ENCODE measurements at regions of chr11 and their contacts with region 1.

Region 1: DNA sequence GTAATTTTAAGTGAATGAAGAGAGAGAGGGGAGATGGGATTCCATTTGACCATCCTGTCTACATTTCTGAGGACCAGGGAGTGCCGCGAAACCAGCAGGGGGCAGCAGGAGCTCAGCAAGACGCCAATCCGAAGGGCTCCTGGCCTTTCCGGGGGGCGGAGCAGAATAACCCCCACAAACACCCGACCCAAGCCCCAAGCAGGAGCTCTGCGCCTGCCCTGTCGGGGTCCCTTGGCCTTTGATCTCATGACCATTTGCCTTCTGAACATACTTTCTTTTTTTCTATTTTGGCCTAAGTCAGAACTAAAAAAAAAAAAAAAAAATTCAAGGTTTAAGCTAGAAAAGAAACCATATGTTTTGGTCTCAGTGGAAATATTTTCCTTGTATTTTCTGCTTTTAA is 21.9 kb upstream of the SCN2B start:
- DNase-seq: peak; percentile 80 to 91 (median 83)
- ATAC-seq: peak; percentile 33 to 64 (median 55)
- H3K4me3 ChIP-seq: peak overlapping the region in 5 of 12 donors; percentile 22 to 42 (median 28)
- H3K27ac ChIP-seq: peak overlapping the region in 8 of 12 donors; percentile 10 to 50 (median 33)
- H3K4me1 ChIP-seq: peaks cover 0 to 57% (median 25%) of the 10 kb centered on the region in 12 donors
- H3K27me3 ChIP-seq: no peaks in the 10 kb centered on the region
- CTCF ChIP-seq: peak; percentile 84 to 93 (median 90)
- POLR2A ChIP-seq: no peak

Region 2: GRCh38 chr11:118180300-118180703 is 18.1 kb before region 1 on chr11:
- intact Hi-C with region 1: loop called in 3 of 10 experiments (anchors 1 to 2 kb)
- DNase-seq: peak; percentile 81 to 92 (median 84)
- ATAC-seq: peak; percentile 95 to 98 (median 97)
- H3K4me3 ChIP-seq: peak overlapping the region in 3 of 12 donors; percentile 13 to 35 (median 25)
- H3K27ac ChIP-seq: peak overlapping the region in 11 of 12 donors; percentile 31 to 86 (median 76)
- H3K4me1 ChIP-seq: peaks cover 0 to 27% (median 9%) of the 10 kb centered on the region in 12 donors
- H3K27me3 ChIP-seq: no peaks in the 10 kb centered on the region
- CTCF ChIP-seq: peak in 4 of 12 donors; percentile 10 to 36 (median 22)
- POLR2A ChIP-seq: no peak

Region 3: GRCh38 chr11:118227865-118228785 is 29.8 kb after region 1 on chr11:
- intact Hi-C with region 1: no loop called
- DNase-seq: no peak
- ATAC-seq: peak in 1 of 4 donors; percentile 58
- H3K4me3 ChIP-seq: no peak overlapping the region
- H3K27ac ChIP-seq: peak overlapping the region in 3 of 12 donors; percentile 32 to 93 (median 50)
- H3K4me1 ChIP-seq: peaks cover 0 to 62% (median 0%) of the 10 kb centered on the region in 12 donors
- H3K27me3 ChIP-seq: no peaks in the 10 kb centered on the region
- CTCF ChIP-seq: no peak
- POLR2A ChIP-seq: no peak

Region 4: DNA sequence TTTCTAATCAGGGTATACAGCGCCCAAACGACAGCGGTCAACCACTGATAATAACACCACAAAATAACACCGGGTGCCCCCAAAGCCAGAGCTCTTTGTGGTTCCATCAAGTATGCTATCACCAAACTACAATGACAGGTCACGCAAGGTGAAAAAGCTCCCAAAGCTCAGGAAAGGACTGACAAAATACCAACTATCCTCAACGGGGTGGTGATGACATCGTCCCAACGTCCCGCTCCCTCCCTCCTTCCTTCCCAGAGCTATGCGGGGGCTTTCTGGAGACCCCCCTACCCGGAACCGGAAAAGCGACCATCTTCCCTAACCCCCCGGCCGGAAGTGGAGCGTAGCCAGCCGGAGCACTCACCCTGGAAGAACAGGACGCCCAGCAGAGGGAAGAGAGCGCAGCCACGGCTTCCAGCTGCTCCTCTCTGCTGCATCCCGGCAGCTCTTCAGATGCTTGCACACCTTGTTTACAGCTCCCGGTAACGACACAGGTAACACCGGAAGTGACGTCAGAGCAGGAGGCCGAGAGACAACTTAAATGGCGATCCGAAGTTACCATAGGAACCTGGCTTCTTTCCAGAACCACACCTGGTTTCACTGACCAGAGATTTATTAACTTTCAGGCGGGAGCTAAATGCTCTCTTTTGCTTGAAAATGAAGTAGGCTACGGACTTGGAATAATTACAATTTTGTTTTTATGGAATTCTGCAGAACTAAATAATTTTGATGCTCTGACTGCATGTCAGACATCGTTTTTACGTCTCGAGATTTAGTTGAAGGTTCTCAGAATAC is 53.7 kb after region 1 on chr11 and contains the start of gene MPZL3:
- intact Hi-C with region 1: loop called in 1 of 10 experiments (anchors 10 kb)
- DNase-seq: peak; percentile 71 to 84 (median 77)
- ATAC-seq: peak; percentile 61 to 89 (median 86)
- H3K4me3 ChIP-seq: peak within 1 kb of the TSS; percentile 40 to 82 (median 70)
- H3K27ac ChIP-seq: peak within 1 kb of the TSS; percentile 3 to 90 (median 66)
- H3K4me1 ChIP-seq: peaks cover 0 to 20% (median 0%) of the 10 kb centered on the region in 12 donors
- H3K27me3 ChIP-seq: peaks cover 0 to 8% (median 0%) of the 10 kb centered on the region in 9 donors
- CTCF ChIP-seq: no peak
- POLR2A ChIP-seq: no peak
- total RNA-seq, gene MPZL3: 1.3 to 6.2 (median 3.3) TPM

Region 5: DNA sequence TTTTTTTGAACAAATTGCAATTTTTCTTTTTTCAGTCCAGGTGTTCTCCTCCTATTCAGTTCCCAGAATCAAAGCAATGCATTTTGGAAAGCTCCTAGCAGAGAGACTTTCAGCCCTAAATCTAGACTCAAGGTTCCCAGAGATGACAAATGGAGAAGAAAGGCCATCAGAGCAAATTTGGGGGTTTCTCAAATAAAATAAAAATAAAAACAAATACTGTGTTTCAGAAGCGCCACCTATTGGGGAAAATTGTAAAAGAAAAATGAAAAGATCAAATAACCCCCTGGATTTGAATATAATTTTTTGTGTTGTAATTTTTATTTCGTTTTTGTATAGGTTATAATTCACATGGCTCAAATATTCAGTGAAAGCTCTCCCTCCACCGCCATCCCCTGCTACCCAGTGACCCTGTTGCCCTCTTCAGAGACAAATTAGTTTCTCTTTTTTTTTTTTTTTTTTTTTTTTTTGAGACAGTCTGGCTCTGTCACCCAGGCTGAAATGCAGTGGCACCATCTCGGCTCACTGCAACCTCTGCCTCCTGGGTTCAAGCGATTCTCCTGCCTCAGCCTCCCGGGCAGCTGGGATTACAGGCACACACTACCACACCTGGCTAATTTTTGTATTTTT is 154.8 kb after region 1 on chr11:
- intact Hi-C with region 1: loop called (anchors 2 to 5 kb)
- DNase-seq: no peak
- ATAC-seq: no peak
- H3K4me3 ChIP-seq: no peak overlapping the region
- H3K27ac ChIP-seq: no peak overlapping the region
- H3K4me1 ChIP-seq: no peaks in the 10 kb centered on the region
- H3K27me3 ChIP-seq: peaks cover 0 to 14% (median 0%) of the 10 kb centered on the region in 9 donors
- CTCF ChIP-seq: peak; percentile 24 to 72 (median 58)
- POLR2A ChIP-seq: no peak

Region 6: GRCh38 chr11:118488480-118489109 is 290.2 kb after region 1 on chr11:
- intact Hi-C with region 1: loop called in 9 of 10 experiments (anchors 2 to 10 kb)
- DNase-seq: peak; percentile 36 to 70 (median 57)
- ATAC-seq: peak in 3 of 4 donors; percentile 42 to 62 (median 58)
- H3K4me3 ChIP-seq: no peak overlapping the region
- H3K27ac ChIP-seq: no peak overlapping the region
- H3K4me1 ChIP-seq: peaks cover 0 to 14% (median 0%) of the 10 kb centered on the region in 12 donors
- H3K27me3 ChIP-seq: no peaks in the 10 kb centered on the region
- CTCF ChIP-seq: peak; percentile 55 to 89 (median 81)
- POLR2A ChIP-seq: no peak